Heart right ventricle (tissue), 16 donors: ENCODE measurements at regions of chr12 and their contacts with region 1.

Region 1: DNA sequence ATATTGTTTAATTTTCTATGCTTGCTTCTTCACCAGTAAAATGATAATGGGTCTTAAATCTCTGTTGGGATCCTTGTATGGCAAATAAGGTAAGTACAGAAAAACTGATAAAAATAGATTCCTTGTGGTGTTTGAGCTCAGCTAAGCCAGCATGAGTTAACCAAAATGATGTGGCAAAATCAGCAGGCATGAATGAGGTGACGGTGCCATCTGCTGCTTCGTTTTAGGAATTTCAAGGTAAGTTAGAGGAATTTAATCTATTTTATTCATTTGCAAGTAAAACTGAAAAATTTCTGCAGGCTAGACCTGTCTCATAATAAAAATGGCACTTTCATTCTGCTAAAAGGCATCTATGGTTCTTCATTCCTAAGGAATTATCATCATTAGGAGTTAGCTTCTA is 10.0 kb upstream of the CLEC7A start:
- DNase-seq: peak in 1 of 2 donors; percentile 43
- ATAC-seq: peak in 6 of 8 donors; percentile 34 to 70 (median 56)
- H3K4me3 ChIP-seq: no peak overlapping the region
- H3K27ac ChIP-seq: no peak overlapping the region
- H3K4me1 ChIP-seq: peaks cover 0 to 19% (median 9%) of the 10 kb centered on the region in 9 donors
- H3K27me3 ChIP-seq: no peaks in the 10 kb centered on the region
- CTCF ChIP-seq: peak; percentile 32 to 81 (median 63)

Region 2: DNA sequence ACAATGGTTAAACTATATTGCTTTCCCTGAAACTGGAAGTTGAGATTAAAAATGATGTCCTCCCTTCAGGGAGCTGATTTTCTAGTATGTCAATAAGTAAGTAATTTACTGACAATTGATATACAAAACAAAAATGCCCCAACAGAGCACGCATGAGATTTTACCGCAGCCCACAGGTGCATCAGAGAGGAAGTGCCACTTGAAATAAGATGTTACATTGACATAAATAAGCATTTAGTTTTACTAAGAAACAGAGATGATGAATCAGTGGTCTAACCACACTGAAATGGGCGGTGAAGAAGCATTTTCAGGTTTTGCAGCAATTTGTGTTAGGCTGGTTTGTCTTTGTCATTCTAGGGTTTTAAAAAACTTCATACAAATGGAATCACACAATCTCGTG is 398.3 kb before region 1 on chr12:
- intact Hi-C with region 1: loop called in 3 of 10 experiments (anchors 5 to 10 kb)
- DNase-seq: no peak
- ATAC-seq: no peak
- H3K4me3 ChIP-seq: no peak overlapping the region
- H3K27ac ChIP-seq: peak overlapping the region in 1 of 10 donors; percentile 79
- H3K4me1 ChIP-seq: peaks cover 0 to 47% (median 17%) of the 10 kb centered on the region in 9 donors
- H3K27me3 ChIP-seq: peaks cover 0 to 4% (median 0%) of the 10 kb centered on the region in 7 donors
- CTCF ChIP-seq: no peak

Region 3: GRCh38 chr12:9750276-9751203 is 389.5 kb before region 1 on chr12:
- intact Hi-C with region 1: loop called in 7 of 10 experiments (anchors 5 to 10 kb)
- DNase-seq: peak in 1 of 2 donors; percentile 48
- ATAC-seq: peak in 7 of 8 donors; percentile 71 to 92 (median 78)
- H3K4me3 ChIP-seq: peak overlapping the region in 6 of 10 donors; percentile 6 to 29 (median 19)
- H3K27ac ChIP-seq: no peak overlapping the region
- H3K4me1 ChIP-seq: peaks cover 0 to 14% (median 0%) of the 10 kb centered on the region in 9 donors
- H3K27me3 ChIP-seq: no peaks in the 10 kb centered on the region
- CTCF ChIP-seq: peak; percentile 68 to 91 (median 84)

Region 4: DNA sequence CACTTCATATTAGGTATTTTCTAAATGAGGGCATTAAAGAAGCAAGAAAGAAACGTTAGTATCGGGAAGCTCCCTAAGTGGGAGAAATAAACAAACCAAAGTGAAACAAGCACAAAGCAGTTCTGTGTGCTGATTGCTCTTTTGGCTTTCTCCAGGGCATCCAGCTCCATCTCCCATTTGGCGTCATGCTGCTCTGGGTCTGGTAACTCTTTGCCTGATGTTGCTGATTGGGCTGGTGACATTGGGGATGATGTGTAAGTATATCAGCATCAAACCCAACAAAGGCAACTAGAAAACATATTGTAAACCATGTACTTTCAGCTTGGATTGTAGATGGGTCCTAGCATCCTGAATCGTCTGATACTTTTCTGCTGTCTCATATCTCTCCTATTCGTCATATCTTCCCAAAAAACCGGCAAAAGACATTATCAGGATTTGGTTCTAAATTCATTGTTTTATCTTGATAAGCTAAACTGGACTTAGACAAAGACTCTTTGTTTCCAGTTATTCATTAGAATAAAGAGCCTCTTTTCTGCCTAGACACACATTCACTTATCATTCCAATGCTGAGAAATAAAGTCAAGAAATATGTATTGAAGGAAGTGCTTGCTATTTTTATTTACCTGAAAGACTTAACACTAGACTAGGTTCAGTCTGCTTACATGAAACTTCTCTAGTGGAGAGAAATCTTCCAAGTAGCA is 127.2 kb before region 1 on chr12:
- intact Hi-C with region 1: loop called in 1 of 10 experiments (anchors 5 kb)
- DNase-seq: no peak
- ATAC-seq: no peak
- H3K4me3 ChIP-seq: no peak overlapping the region
- H3K27ac ChIP-seq: no peak overlapping the region
- H3K4me1 ChIP-seq: no peaks in the 10 kb centered on the region
- H3K27me3 ChIP-seq: peaks cover 0 to 29% (median 0%) of the 10 kb centered on the region in 7 donors
- CTCF ChIP-seq: no peak

Region 5: GRCh38 chr12:10033783-10034545 is 106.0 kb before region 1 on chr12:
- intact Hi-C with region 1: loop called (anchors 1 to 5 kb)
- DNase-seq: no peak
- ATAC-seq: no peak
- H3K4me3 ChIP-seq: no peak overlapping the region
- H3K27ac ChIP-seq: peak overlapping the region in 1 of 10 donors; percentile 3
- H3K4me1 ChIP-seq: peaks cover 0 to 12% (median 0%) of the 10 kb centered on the region in 9 donors
- H3K27me3 ChIP-seq: no peaks in the 10 kb centered on the region
- CTCF ChIP-seq: peak; percentile 41 to 81 (median 64)

Region 6: GRCh38 chr12:10119066-10119465 is 20.9 kb before region 1 on chr12:
- intact Hi-C with region 1: loop called in 1 of 10 experiments (anchors 2 kb)
- DNase-seq: no peak
- ATAC-seq: no peak
- H3K4me3 ChIP-seq: no peak overlapping the region
- H3K27ac ChIP-seq: peak overlapping the region in 1 of 10 donors; percentile 72
- H3K4me1 ChIP-seq: peaks cover 0 to 7% (median 0%) of the 10 kb centered on the region in 9 donors
- H3K27me3 ChIP-seq: no peaks in the 10 kb centered on the region
- CTCF ChIP-seq: no peak

Region 7: DNA sequence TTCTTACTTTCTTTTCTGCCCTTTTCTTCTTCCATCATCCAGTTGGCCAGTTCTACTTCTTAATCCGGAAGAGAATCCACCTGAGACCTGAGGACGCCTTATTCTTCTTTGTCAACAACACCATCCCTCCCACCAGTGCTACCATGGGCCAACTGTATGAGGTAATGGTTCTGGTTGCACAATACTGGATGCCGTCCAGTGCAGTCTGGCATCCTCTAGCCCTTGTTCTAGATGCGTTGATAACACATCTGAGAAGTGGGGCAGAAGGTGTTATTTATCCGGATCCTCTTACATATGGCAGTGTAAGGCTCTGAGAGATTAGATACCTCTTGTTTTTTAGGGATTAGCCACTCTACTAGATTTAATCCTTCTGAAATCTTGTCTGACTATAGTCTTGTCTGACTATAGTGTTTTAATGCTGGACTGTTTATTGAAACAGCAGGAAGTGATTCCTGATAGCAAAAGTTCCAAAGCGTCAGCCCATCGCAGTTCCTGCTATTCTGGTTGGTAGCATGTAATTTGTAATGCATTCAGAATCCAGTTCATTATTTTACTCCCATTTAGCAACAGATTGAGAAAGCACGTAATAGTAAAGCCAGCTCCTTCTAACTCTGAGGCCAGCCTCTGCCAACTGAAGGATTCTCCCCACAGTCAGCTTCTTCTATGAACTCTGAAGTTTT is 80.5 kb after region 1 on chr12:
- intact Hi-C with region 1: no loop called
- DNase-seq: peak; percentile 67 to 83
- ATAC-seq: peak; percentile 86 to 96 (median 94)
- H3K4me3 ChIP-seq: peak overlapping the region in 1 of 10 donors; percentile 6
- H3K27ac ChIP-seq: peak overlapping the region; percentile 31 to 100 (median 68)
- H3K4me1 ChIP-seq: peaks cover 5 to 62% (median 43%) of the 10 kb centered on the region in 9 donors
- H3K27me3 ChIP-seq: no peaks in the 10 kb centered on the region
- CTCF ChIP-seq: no peak